ENCODE measurements at regions of chrX and their contacts with region 1.

Region 1: GRCh38 chrX:38891641-38892413 is 90.6 kb downstream of the MID1IP1 start:
- DNase-seq: no peak
- H3K4me3 ChIP-seq: no peak overlapping the region
- H3K27ac ChIP-seq: no peak overlapping the region
- H3K4me1 ChIP-seq: no peaks in the 10 kb centered on the region
- H3K27me3 ChIP-seq: no peaks in the 10 kb centered on the region
- CTCF ChIP-seq: no peak

Region 2: DNA sequence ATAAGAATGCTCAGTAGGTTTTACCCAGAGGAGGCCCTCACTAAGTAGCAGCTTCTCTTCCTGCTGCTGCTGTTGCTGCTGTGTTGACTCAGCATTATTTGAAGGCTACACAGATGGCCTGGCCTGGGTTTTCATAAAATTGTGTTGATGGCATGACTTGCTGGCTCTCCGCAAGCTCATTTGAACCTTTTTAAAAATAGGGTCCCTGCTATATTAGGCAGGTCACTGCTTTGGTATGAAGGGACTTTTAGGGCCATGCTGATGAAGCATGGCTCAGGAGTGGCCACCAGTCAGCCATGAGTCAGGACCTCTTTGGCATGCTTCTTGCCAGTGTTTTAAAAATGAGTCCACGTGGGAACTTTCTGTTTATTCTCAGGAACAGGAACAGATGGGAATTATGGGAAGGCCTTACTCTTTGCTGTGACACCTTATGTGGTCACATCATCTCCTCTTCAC is 38.2 kb after region 1 on chrX:
- intact Hi-C with region 1: no loop called
- DNase-seq: peak; percentile 14 to 81
- H3K4me3 ChIP-seq: no peak overlapping the region
- H3K27ac ChIP-seq: peak overlapping the region; percentile 56 to 64
- H3K4me1 ChIP-seq: peaks cover 0 to 5% of the 10 kb centered on the region in 2 donors
- H3K27me3 ChIP-seq: no peaks in the 10 kb centered on the region
- CTCF ChIP-seq: no peak

Region 3: GRCh38 chrX:39238006-39238405 is 346.2 kb after region 1 on chrX:
- intact Hi-C with region 1: no loop called
- DNase-seq: no peak
- H3K4me3 ChIP-seq: no peak overlapping the region
- H3K27ac ChIP-seq: no peak overlapping the region
- H3K4me1 ChIP-seq: no peaks in the 10 kb centered on the region
- H3K27me3 ChIP-seq: no peaks in the 10 kb centered on the region
- CTCF ChIP-seq: no peak

Region 4: GRCh38 chrX:40329616-40330015 is 1437.8 kb after region 1 on chrX:
- intact Hi-C with region 1: loop called (anchors 10 kb)
- DNase-seq: no peak
- H3K4me3 ChIP-seq: no peak overlapping the region
- H3K27ac ChIP-seq: no peak overlapping the region
- H3K4me1 ChIP-seq: no peaks in the 10 kb centered on the region
- H3K27me3 ChIP-seq: no peaks in the 10 kb centered on the region
- CTCF ChIP-seq: no peak

Measured in ascending aorta (tissue), 2 donors.